ENCODE measurements at regions of chr11 and their contacts with region 1.

Region 1: DNA sequence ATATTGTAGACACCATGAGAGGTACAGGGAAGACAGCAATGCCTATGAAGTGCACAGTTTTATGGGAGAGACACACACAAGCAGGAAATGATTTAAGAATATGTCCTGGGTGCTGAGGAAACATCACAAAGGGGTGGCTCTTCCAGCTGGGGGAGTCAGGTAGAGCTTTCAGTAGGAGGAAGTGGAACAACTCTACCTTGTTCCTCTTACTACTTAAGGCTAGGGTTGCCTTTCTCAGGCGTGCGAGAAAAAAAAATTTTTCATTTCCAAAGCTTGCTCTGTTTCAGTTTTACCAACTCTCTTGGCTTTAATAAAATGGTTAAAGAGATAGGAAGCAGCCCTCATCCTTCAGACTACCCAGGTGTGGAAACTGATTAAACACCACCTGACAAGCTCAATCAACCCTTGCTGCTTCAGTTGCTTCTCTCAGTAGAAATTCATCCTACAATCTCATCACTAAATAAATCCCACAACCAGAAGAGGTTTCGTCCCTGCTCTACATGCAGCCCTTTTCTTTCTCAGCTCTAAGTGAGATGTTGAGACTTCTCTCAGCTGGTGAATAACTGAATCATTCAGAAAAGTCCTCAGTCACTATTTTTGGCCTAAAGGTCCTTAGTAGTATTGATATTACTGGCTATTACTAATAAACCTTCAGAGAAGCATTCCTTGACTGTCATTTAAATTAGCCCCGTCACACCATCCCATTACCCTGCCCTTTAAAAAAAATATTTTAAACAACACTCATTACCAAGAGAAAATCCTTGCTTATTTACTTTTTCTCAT is 5.9 kb downstream of the ABTB2 start:
- DNase-seq: no peak
- ATAC-seq: no peak
- H3K4me3 ChIP-seq: no peak overlapping the region
- H3K27ac ChIP-seq: no peak overlapping the region
- H3K4me1 ChIP-seq: peaks cover 20% of the 10 kb centered on the region
- H3K27me3 ChIP-seq: no peaks in the 10 kb centered on the region

Region 2: GRCh38 chr11:34154059-34154875 is 197.6 kb before region 1 on chr11:
- intact Hi-C with region 1: no loop called
- DNase-seq: peak in 1 of 3 donors; percentile 57
- ATAC-seq: no peak
- H3K4me3 ChIP-seq: no peak overlapping the region
- H3K27ac ChIP-seq: no peak overlapping the region
- H3K4me1 ChIP-seq: no peaks in the 10 kb centered on the region
- H3K27me3 ChIP-seq: no peaks in the 10 kb centered on the region

Region 3: DNA sequence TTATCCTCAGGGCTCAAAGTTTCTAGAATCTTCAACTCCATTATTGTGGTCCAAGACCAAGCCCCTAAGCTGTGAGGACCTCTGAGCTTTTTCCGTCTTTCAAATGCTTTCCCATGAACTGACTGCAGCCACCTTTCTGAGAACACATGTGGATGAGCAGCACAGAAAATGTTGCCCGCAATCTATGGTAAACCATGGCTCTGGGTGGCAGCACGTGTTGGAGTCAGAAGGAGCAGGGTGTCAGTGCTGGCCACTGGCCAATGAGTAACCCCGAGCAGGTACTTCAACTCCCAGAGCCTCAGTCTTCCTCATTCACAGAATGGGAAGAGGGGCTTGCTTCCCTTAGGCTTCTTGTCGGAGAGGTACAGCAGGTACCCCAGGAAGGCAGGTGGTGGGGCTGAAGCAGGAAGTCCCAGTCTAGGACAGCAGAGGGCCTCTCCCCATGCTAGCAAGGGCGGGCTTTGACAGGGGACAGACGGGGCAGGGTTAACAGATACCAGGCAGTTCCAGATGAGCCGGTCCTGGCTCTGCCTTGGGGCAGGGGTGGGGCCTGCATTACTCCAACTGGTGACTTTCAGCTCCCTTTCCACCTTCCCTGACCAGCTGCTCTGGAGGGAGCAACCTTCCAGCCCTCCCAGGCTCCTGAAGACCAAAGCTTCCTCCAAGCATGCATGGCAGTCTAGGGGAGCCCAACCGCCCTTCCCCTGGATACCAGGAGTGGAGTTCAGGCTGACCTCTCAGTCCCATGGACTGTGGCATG is 186.2 kb before region 1 on chr11:
- intact Hi-C with region 1: no loop called
- DNase-seq: peak in 1 of 3 donors; percentile 26
- ATAC-seq: no peak
- H3K4me3 ChIP-seq: no peak overlapping the region
- H3K27ac ChIP-seq: no peak overlapping the region
- H3K4me1 ChIP-seq: no peaks in the 10 kb centered on the region
- H3K27me3 ChIP-seq: no peaks in the 10 kb centered on the region

Region 4: GRCh38 chr11:34263440-34264172 is 88.3 kb before region 1 on chr11:
- intact Hi-C with region 1: loop called in 1 of 4 experiments (anchors 5 kb)
- DNase-seq: peak in 2 of 3 donors; percentile 56 to 58
- ATAC-seq: peak; percentile 61 to 62
- H3K4me3 ChIP-seq: no peak overlapping the region
- H3K27ac ChIP-seq: peak overlapping the region; percentile 20
- H3K4me1 ChIP-seq: peaks cover 25% of the 10 kb centered on the region
- H3K27me3 ChIP-seq: no peaks in the 10 kb centered on the region

Region 5: GRCh38 chr11:34274723-34275401 is 77.0 kb before region 1 on chr11:
- intact Hi-C with region 1: no loop called
- DNase-seq: peak; percentile 90 to 94 (median 91)
- ATAC-seq: peak; percentile 91 to 95
- H3K4me3 ChIP-seq: no peak overlapping the region
- H3K27ac ChIP-seq: peak overlapping the region; percentile 32
- H3K4me1 ChIP-seq: peaks cover 6% of the 10 kb centered on the region
- H3K27me3 ChIP-seq: no peaks in the 10 kb centered on the region

Measured in right cardiac atrium (tissue), 5 donors.